ENCODE measurements at regions of chr19 and their contacts with region 1.

Region 1: DNA sequence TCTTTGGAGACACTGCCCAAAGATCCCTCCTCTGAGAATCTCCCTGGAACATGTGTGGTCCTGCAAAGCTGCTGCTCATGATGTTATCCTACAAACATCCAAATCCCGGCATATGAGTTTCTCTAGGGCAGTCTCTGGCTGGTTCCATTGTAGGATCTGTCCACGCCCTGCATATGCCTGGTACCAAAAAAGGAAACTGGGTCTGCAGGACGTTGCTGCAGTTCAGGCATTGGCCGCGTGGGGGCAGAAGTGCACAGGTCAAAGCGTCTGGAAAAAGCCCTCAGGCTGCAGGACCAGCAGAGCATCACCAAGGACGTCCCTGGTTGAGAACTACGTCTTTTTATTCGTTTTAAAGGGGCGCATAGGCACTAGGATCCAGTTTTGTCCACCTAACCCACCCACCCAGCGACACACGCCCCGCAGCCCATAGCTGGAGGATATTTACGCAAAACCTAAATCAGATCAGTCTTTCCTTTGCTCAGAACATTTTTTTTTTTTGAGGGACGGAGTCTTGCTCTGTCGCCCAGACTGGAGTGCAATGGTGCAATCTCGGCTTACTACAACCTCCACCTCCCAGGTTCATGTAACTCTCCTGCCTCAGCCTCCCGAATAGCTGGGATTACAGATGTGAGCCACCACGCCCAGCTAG is 12.9 kb upstream of the ZNF564 start:
- DNase-seq: peak; percentile 94
- H3K4me3 Mint-ChIP-seq: no peak overlapping the region
- H3K27ac Mint-ChIP-seq: no peak overlapping the region
- H3K4me1 Mint-ChIP-seq: peaks cover 5% of the 10 kb centered on the region
- H3K27me3 Mint-ChIP-seq: peaks cover 13% of the 10 kb centered on the region

Region 2: DNA sequence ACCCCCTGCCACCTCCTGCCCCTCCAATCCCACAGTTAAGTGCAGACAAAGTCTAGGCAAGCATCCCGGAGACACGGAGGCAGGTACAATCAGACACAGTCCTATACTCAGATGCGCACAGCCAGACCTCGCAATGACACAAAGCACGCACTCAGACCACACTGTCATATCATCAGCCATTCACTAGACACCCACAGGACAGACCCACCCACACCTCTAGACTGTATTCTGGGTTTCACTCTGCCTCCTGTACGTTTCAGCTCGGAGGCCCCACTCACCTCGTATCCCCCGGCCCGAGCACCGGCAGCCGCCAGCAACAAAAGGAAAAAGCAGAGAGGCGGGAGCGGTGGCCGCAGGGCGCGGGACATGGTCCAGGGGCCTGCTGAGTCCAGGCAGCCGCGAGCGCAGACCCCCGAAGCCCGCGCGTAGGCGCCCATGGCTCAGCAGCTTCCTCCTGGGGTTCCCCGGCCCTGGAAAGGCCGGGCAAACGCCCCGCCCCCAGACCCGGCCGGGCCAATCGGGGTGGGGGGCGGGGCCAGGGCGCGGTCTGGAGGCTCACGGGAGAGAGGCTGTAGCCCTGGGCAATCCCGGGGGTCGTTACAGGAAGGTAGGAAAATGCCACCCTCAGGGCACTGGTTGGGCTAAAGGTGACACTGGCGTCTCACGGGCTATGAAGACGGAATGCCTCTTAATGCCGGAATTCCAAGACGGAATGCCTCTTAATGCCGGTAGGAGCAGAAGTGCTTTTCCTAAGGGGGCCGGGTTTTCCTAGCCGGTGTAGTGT is 102.3 kb after region 1 on chr19 and contains the starts of genes MAN2B1 and WDR83:
- CTCF ChIA-PET with region 1: interaction called, 35 read pairs
- DNase-seq: peak; percentile 85
- H3K4me3 Mint-ChIP-seq: peak within 1 kb of the TSS; percentile 82
- H3K27ac Mint-ChIP-seq: peak within 1 kb of the TSS; percentile 81
- H3K4me1 Mint-ChIP-seq: peaks cover 62% of the 10 kb centered on the region
- H3K27me3 Mint-ChIP-seq: no peaks in the 10 kb centered on the region

Region 3: GRCh38 chr19:12676384-12676792 is 112.2 kb after region 1 on chr19:
- CTCF ChIA-PET with region 1: interaction called, 35 read pairs
- DNase-seq: peak; percentile 92
- H3K4me3 Mint-ChIP-seq: no peak overlapping the region
- H3K27ac Mint-ChIP-seq: no peak overlapping the region
- H3K4me1 Mint-ChIP-seq: peaks cover 35% of the 10 kb centered on the region
- H3K27me3 Mint-ChIP-seq: no peaks in the 10 kb centered on the region